AG04449 (cell line): ENCODE measurements at regions of chr14 and their contacts with region 1.

Region 1: DNA sequence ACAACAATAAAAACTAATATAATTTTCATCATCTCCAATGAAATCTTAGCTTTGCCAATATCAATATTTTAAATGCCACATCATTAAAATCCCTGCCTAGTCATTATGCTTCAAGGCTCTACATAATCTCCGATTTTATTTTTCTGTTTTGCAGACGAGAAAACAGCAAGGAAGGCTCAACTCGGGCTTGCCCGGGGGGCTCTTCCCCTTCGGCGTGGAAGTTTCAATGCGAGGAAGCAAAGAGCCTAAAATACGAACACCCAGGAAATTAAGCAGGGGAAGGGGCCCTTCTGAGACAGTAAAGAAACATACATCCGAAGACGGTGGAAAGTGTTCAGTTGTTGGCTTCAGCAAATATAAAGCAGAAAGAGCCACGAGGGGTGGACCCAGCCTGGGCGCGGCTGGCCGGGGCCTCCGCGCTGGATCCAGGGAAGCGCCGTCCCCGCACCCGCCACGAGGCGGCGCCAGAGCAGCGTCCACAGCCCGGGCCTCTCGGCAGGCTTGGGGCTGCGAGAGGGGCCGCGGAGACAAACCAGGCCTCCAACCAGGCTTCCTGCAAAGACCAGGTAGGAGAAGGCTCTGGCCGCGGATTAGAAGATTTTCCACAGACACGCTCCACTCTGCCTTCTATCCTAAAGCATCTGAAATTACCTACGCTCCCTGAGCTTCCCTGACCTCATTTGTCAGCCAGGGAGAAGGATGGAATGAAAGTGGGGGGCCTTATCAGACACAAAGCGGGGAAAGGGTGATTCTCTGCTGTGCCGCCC is 77.2 kb downstream of the SERPINA3 start:
- DNase-seq: no peak
- H3K4me3 ChIP-seq: peak overlapping the region; percentile 33
- CTCF ChIP-seq: peak; percentile 97

Region 2: DNA sequence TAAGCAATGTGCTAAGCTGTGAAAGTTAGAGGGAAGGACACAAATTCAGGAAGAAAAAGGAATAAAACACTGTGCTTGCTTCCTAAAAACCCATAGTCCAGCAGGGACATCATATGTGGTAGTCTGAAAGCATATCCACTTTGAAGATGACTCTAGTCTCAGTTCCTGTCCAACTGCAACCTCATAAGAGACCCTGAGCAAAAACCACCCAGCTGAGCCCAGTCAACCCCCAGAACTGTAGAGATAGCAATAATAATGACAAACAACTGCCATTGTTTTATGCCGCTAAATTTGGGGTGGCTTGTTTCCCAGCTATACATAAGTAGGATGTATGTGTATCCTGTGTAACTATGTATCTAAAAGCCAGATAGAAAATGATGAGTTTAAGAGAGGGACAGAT is 132.1 kb before region 1 on chr14:
- CTCF ChIA-PET with region 1: no interaction called
- POLR2A ChIA-PET with region 1: no interaction called
- DNase-seq: no peak
- H3K4me3 ChIP-seq: no peak overlapping the region
- CTCF ChIP-seq: no peak

Region 3: GRCh38 chr14:95098984-95099599 is 409.7 kb after region 1 on chr14:
- CTCF ChIA-PET with region 1: interaction called, 58 read pairs
- POLR2A ChIA-PET with region 1: no interaction called
- DNase-seq: peak; percentile 17
- H3K4me3 ChIP-seq: no peak overlapping the region
- CTCF ChIP-seq: peak; percentile 79

Region 4: DNA sequence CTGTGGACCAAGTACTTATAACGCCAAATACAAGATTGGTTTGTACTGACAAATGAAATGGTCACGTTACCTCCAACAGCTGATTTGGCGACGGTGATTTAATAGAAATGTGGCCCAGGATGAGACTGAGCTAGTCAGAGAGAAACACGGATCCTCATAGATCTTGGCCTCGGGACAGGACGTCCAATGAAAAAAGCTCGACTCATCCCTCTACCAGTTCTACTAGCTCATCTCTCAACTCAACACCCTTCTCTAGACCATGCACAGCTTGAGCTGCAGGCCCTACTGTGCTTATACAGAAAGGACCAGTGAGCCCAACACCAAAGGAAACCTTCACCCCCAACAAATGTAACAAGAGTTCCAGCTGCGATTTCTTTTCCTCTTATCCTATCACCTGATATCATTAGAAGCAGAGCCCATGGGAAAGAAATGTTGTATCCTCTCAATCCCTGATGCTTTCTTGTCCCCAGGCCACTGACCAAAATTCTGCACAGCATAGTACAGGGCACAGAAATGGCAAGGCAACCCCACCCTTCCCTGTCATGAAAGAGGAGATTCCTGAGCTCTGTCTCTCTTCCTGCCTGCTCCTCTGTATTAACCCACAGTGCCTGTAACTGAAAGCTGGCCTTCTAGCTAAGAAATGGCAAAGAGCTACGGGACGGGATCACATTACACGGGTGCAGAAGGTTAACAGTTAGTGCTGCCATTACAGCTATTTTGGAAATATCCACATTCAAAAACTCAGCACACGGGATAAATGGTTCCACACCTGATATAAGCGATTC is 428.7 kb after region 1 on chr14:
- CTCF ChIA-PET with region 1: interaction called, 12 read pairs
- POLR2A ChIA-PET with region 1: no interaction called
- DNase-seq: no peak
- H3K4me3 ChIP-seq: no peak overlapping the region
- CTCF ChIP-seq: no peak

Region 5: DNA sequence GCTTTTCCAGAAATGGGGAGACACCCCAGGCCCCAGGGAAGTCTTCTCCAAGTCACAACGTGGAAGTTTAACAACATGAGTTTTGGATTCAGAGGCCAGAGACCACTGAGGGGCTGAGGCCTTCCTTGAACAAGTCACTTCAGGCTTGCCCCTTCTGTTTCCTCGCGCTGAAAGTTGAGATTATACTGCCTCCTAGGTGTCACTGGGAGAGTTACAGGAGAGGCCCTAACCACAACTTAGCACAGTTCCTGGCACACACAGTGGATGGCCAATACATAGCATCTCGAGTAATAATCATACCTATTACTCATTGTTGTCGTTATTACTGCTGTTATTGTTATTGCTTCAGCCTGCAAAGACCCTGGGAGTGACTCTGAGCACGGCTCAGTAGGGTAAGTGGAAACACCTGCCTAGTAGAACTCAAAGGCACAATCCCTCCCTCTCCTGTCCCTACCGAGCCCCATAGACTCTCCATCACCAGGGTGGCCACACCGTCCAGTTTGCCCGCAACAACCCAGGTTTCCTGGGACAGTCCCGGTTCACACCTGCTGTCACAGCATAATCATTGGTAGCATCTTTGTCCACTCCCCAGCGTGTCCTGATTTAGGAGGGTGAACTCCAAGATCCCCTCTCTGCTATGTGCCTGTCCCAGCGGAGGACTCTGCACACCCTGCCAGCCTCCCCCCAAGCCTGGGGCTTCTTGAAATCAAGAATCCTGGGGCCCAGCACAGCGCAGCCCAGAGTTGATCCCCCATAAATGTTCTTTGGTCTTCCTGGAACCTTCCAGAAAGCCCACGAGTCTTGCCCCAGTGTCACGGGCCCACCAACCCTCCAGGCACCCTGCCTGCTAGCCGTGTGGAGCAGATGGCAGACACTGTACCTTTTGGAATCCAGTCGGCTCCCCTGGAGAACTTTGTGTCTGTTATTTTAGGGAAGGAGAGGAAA is 742.1 kb after region 1 on chr14:
- CTCF ChIA-PET with region 1: interaction called, 23 read pairs
- POLR2A ChIA-PET with region 1: no interaction called
- DNase-seq: no peak
- H3K4me3 ChIP-seq: no peak overlapping the region
- CTCF ChIP-seq: peak; percentile 42